Naive thymus-derived CD4-positive, alpha-beta T cell (primary cell): ENCODE measurements at regions of chr9 and their contacts with region 1.

Region 1: GRCh38 chr9:128026773-128027541 is 40.2 kb downstream of the NAIF1 start:
- DNase-seq: peak in 8 of 9 donors; percentile 42 to 78 (median 62)
- ATAC-seq: peak; percentile 10
- H3K4me3 ChIP-seq: peak overlapping the region; percentile 52
- H3K4me3 Mint-ChIP-seq: peak overlapping the region; percentile 76 to 91 (median 85)
- H3K27ac ChIP-seq: peak overlapping the region; percentile 96
- H3K27ac Mint-ChIP-seq: peak overlapping the region; percentile 92 to 100 (median 98)
- H3K4me1 ChIP-seq: peaks cover 87 to 88% of the 10 kb centered on the region in 2 donors
- H3K4me1 Mint-ChIP-seq: peaks cover 44 to 94% (median 89%) of the 10 kb centered on the region in 7 donors
- H3K27me3 ChIP-seq: no peaks in the 10 kb centered on the region
- H3K27me3 Mint-ChIP-seq: no peaks in the 10 kb centered on the region

Region 2: GRCh38 chr9:127779136-127779981 is 247.6 kb before region 1 on chr9:
- CTCF ChIA-PET with region 1: no interaction called
- POLR2A ChIA-PET with region 1: no interaction called
- intact Hi-C with region 1: loop called in 1 of 2 experiments (anchors 5 kb)
- DNase-seq: peak in 1 of 9 donors; percentile 64
- ATAC-seq: peak; percentile 39
- H3K4me3 ChIP-seq: peak overlapping the region; percentile 97
- H3K4me3 Mint-ChIP-seq: peak overlapping the region; percentile 94 to 100 (median 98)
- H3K27ac ChIP-seq: peak overlapping the region; percentile 88
- H3K27ac Mint-ChIP-seq: peak overlapping the region; percentile 88 to 98 (median 94)
- H3K4me1 ChIP-seq: peaks cover 51 to 59% of the 10 kb centered on the region in 2 donors
- H3K4me1 Mint-ChIP-seq: peaks cover 32 to 76% (median 60%) of the 10 kb centered on the region in 7 donors
- H3K27me3 ChIP-seq: no peaks in the 10 kb centered on the region
- H3K27me3 Mint-ChIP-seq: no peaks in the 10 kb centered on the region

Region 3: GRCh38 chr9:127970401-127971313 is 56.3 kb before region 1 on chr9:
- CTCF ChIA-PET with region 1: interaction called, 262 read pairs
- POLR2A ChIA-PET with region 1: interaction called, 1,511 read pairs
- intact Hi-C with region 1: loop called (anchors 1 kb)
- DNase-seq: peak in 8 of 9 donors; percentile 68 to 84 (median 80)
- ATAC-seq: peak; percentile 72
- H3K4me3 ChIP-seq: peak overlapping the region; percentile 93
- H3K4me3 Mint-ChIP-seq: peak overlapping the region; percentile 89 to 99 (median 96)
- H3K27ac ChIP-seq: peak overlapping the region; percentile 84
- H3K27ac Mint-ChIP-seq: peak overlapping the region; percentile 90 to 99 (median 97)
- H3K4me1 ChIP-seq: peaks cover 61 to 93% of the 10 kb centered on the region in 2 donors
- H3K4me1 Mint-ChIP-seq: peaks cover 69 to 95% (median 83%) of the 10 kb centered on the region in 7 donors
- H3K27me3 ChIP-seq: no peaks in the 10 kb centered on the region
- H3K27me3 Mint-ChIP-seq: no peaks in the 10 kb centered on the region

Region 4: DNA sequence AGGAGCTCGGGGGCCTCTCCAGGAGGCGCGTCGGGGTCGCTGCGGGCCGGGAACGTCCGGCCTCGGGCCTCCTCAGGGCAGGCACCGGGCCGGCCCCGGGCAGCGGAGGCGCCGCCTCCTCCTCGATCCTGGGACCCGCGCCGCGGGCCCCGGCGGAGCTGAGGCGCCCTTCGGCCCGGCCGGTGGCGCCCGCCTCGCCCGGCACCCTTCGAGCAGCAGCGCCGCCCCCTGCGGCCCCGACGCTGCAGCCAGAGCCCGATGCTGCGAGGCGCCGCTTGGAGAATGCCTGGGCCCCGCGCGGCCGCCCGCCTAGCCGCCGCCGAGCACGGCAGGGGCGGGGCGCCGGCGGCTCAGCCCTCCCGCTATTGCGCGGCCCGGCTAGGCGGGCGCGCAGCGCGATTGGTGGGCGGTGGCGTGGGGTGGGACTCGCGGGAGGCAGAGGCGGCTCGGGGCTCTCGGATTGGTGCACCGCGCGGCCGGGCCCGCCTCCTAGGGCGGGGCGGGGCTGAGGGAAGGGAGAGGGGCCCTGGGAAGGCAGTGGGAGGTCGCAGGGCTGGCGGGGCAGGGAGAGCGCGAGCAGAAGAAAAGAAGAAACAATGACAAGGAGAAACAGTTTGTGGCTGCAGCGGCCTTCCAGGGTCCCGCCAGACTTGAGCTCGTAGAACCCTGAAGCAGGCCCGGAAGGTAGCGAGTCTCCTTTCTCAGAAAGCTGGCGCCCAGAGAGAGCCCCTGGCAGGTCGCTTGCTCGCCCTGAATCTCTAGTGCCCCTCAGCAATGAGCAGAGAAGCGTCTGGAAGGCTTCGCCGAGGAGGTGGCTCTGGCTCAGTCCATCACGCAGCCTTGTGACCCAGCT is 46.0 kb before region 1 on chr9 and contains the start of gene EEIG1:
- CTCF ChIA-PET with region 1: interaction called, 262 read pairs
- POLR2A ChIA-PET with region 1: interaction called, 1,511 read pairs
- intact Hi-C with region 1: loop called (anchors 1 kb)
- DNase-seq: peak; percentile 95 to 100 (median 99)
- ATAC-seq: peak; percentile 96
- H3K4me3 ChIP-seq: peak within 1 kb of the TSS; percentile 93
- H3K4me3 Mint-ChIP-seq: peak within 1 kb of the TSS; percentile 93 to 99 (median 98)
- H3K27ac ChIP-seq: peak within 1 kb of the TSS; percentile 84
- H3K27ac Mint-ChIP-seq: peak within 1 kb of the TSS; percentile 92 to 100 (median 98)
- H3K4me1 ChIP-seq: peaks cover 25 to 38% of the 10 kb centered on the region in 2 donors
- H3K4me1 Mint-ChIP-seq: peaks cover 35 to 47% (median 42%) of the 10 kb centered on the region in 7 donors
- H3K27me3 ChIP-seq: no peaks in the 10 kb centered on the region
- H3K27me3 Mint-ChIP-seq: no peaks in the 10 kb centered on the region
- total RNA-seq, gene EEIG1: 252 to 664 (median 347) TPM

Region 5: DNA sequence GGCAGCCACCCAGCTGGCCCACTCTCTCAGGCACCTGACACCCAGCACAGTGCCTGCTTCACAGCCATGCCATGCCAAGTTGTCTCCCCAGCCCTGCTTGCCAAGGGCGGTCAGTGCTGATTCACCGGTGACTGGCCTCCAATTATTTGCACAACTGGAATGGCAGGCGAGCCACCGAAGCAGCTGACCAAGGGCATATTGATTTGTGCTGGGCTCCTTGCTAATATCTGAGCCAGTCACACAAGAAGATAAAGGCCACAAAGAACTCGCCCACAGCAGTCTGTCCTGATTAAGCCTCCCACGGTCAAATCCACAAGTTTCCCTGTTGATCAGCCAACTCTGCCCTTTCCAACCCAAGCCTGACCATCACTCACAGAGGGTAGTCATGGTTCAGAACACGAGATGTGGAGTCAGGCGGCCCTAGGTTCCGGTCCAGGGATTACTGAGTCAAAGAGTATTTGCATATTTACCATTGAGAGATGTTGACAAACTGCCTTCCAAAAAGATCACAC is 39.8 kb before region 1 on chr9:
- CTCF ChIA-PET with region 1: interaction called, 262 read pairs
- POLR2A ChIA-PET with region 1: interaction called, 1,511 read pairs
- intact Hi-C with region 1: no loop called
- DNase-seq: no peak
- ATAC-seq: no peak
- H3K4me3 ChIP-seq: no peak overlapping the region
- H3K4me3 Mint-ChIP-seq: no peak overlapping the region
- H3K27ac ChIP-seq: no peak overlapping the region
- H3K27ac Mint-ChIP-seq: peak overlapping the region in 6 of 9 donors; percentile 9 to 80 (median 60)
- H3K4me1 ChIP-seq: peaks cover 0 to 52% of the 10 kb centered on the region in 2 donors
- H3K4me1 Mint-ChIP-seq: peaks cover 27 to 65% (median 58%) of the 10 kb centered on the region in 7 donors
- H3K27me3 ChIP-seq: no peaks in the 10 kb centered on the region
- H3K27me3 Mint-ChIP-seq: no peaks in the 10 kb centered on the region

Region 6: GRCh38 chr9:128007566-128008138 is 19.3 kb before region 1 on chr9:
- CTCF ChIA-PET with region 1: interaction called, 47 read pairs
- POLR2A ChIA-PET with region 1: interaction called, 508 read pairs
- intact Hi-C with region 1: loop called (anchors 1 kb)
- DNase-seq: peak; percentile 61 to 97 (median 96)
- ATAC-seq: peak; percentile 95
- H3K4me3 ChIP-seq: peak overlapping the region; percentile 48
- H3K4me3 Mint-ChIP-seq: peak overlapping the region; percentile 76 to 87 (median 86)
- H3K27ac ChIP-seq: peak overlapping the region; percentile 66
- H3K27ac Mint-ChIP-seq: peak overlapping the region; percentile 93 to 100 (median 98)
- H3K4me1 ChIP-seq: peaks cover 39 to 76% of the 10 kb centered on the region in 2 donors
- H3K4me1 Mint-ChIP-seq: peaks cover 28 to 93% (median 65%) of the 10 kb centered on the region in 7 donors
- H3K27me3 ChIP-seq: no peaks in the 10 kb centered on the region
- H3K27me3 Mint-ChIP-seq: peaks cover 0 to 3% (median 0%) of the 10 kb centered on the region in 5 donors